PC-9 (cell line): ENCODE measurements at regions of chr1 and their contacts with region 1.

Region 1: DNA sequence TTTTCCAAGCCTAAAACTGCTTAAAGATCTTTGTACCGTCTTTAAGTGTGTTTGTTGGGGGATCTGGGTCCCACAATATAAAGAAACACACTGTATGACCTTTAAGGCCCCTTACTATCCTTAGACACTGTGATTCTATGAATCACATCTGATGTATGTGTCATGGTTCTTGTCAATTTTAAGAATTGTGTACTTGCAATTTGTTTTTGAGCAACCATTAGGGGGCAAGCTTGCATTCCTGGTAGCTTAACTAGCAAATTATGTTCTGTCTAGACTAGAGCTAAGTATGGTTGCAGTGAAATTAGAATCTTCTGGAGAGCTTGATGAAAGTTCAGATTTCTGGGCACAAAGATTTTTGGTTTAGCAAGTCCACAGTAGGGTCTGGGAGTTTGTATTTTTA is 219.5 kb downstream of the TPR start:
- DNase-seq: peak; percentile 11 to 62
- H3K4me3 ChIP-seq: no peak overlapping the region
- H3K27ac ChIP-seq: no peak overlapping the region
- H3K4me1 ChIP-seq: peaks cover 21% of the 10 kb centered on the region
- H3K27me3 ChIP-seq: no peaks in the 10 kb centered on the region
- CTCF ChIP-seq: peak; percentile 66

Region 2: GRCh38 chr1:185733818-185734771 is 421.5 kb before region 1 on chr1 and contains the start of gene HMCN1:
- CTCF ChIA-PET with region 1: no interaction called
- POLR2A ChIA-PET with region 1: no interaction called
- intact Hi-C with region 1: loop called (anchors 5 kb)
- DNase-seq: peak in 1 of 2 experiments; percentile 39
- H3K4me3 ChIP-seq: peak within 1 kb of the TSS; percentile 79
- H3K27ac ChIP-seq: no peak within 1 kb of the TSS
- H3K4me1 ChIP-seq: peaks cover 14% of the 10 kb centered on the region
- H3K27me3 ChIP-seq: no peaks in the 10 kb centered on the region
- CTCF ChIP-seq: no peak; the same call in 1 of the 2 replicates
- total RNA-seq, gene HMCN1: 0.31 and 0.83 TPM in 2 replicates

Region 3: DNA sequence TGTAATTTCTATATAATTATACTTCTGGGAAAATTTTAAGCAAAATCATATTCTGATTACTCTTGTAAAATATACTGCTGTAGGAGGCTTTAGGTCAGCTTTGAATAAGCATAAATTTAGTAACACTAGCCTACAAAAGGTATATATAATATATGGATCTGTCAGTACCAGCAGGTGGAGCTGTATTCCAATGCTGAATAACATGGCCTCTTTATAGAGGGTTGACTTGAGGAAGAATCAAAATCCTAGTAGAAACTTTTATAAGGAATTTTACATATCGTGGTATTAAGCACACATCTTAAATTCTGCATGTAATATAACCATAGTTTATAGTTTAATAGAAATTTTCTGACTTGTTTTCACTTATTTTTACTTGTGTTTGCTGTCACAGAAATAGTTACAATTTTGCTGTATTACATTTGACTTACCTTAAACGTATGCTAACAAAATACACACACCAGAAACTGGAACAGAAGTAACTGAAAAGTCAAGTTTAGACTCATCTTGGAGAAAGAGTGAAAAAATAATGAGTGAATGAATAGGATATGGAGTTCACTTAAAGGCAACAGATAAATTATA is 342.1 kb before region 1 on chr1:
- CTCF ChIA-PET with region 1: interaction called, 3 read pairs
- POLR2A ChIA-PET with region 1: no interaction called
- intact Hi-C with region 1: loop called (anchors 2 kb)
- DNase-seq: peak in 1 of 2 experiments; percentile 50
- H3K4me3 ChIP-seq: no peak overlapping the region
- H3K27ac ChIP-seq: no peak overlapping the region
- H3K4me1 ChIP-seq: no peaks in the 10 kb centered on the region
- H3K27me3 ChIP-seq: no peaks in the 10 kb centered on the region
- CTCF ChIP-seq: peak; percentile 85

Region 4: GRCh38 chr1:186188004-186188539 is 32.5 kb after region 1 on chr1:
- CTCF ChIA-PET with region 1: interaction called, 4 read pairs
- POLR2A ChIA-PET with region 1: no interaction called
- intact Hi-C with region 1: loop called (anchors 2 kb)
- DNase-seq: peak; percentile 54 to 88
- H3K4me3 ChIP-seq: no peak overlapping the region; the same call in 1 of the 2 replicates
- H3K27ac ChIP-seq: peak overlapping the region; percentile 86
- H3K4me1 ChIP-seq: peaks cover 53% of the 10 kb centered on the region
- H3K27me3 ChIP-seq: no peaks in the 10 kb centered on the region
- CTCF ChIP-seq: no peak

Region 5: GRCh38 chr1:186212544-186213226 is 57.1 kb after region 1 on chr1:
- CTCF ChIA-PET with region 1: interaction called, 10 read pairs
- POLR2A ChIA-PET with region 1: no interaction called
- intact Hi-C with region 1: loop called (anchors 1 kb)
- DNase-seq: peak; percentile 55 to 82
- H3K4me3 ChIP-seq: no peak overlapping the region
- H3K27ac ChIP-seq: no peak overlapping the region
- H3K4me1 ChIP-seq: no peaks in the 10 kb centered on the region
- H3K27me3 ChIP-seq: no peaks in the 10 kb centered on the region
- CTCF ChIP-seq: peak; percentile 93

Region 6: GRCh38 chr1:186325239-186325638 is 169.6 kb after region 1 on chr1:
- CTCF ChIA-PET with region 1: no interaction called
- POLR2A ChIA-PET with region 1: no interaction called
- intact Hi-C with region 1: loop called (anchors 10 kb)
- DNase-seq: no peak
- H3K4me3 ChIP-seq: no peak overlapping the region
- H3K27ac ChIP-seq: no peak overlapping the region
- H3K4me1 ChIP-seq: no peaks in the 10 kb centered on the region
- H3K27me3 ChIP-seq: no peaks in the 10 kb centered on the region
- CTCF ChIP-seq: peak; percentile 61